ENCODE measurements at regions of chr1 and their contacts with region 1.

Region 1: GRCh38 chr1:80656071-80656509 is 1144.6 kb upstream of the ADGRL2 start:
- DNase-seq: no peak
- H3K4me3 ChIP-seq: no peak overlapping the region
- H3K27ac ChIP-seq: no peak overlapping the region
- H3K4me1 ChIP-seq: peaks cover 0 to 7% (median 0%) of the 10 kb centered on the region in 4 experiments; a peak in 1 of 7 replicates
- H3K27me3 ChIP-seq: no peaks in the 10 kb centered on the region
- CTCF ChIP-seq: peak; percentile 5 to 72 (median 43)
- EP300 ChIP-seq: no peak
- POLR2A ChIP-seq: no peak
- RAD21 ChIP-seq: peak; percentile 52 to 55

Region 2: DNA sequence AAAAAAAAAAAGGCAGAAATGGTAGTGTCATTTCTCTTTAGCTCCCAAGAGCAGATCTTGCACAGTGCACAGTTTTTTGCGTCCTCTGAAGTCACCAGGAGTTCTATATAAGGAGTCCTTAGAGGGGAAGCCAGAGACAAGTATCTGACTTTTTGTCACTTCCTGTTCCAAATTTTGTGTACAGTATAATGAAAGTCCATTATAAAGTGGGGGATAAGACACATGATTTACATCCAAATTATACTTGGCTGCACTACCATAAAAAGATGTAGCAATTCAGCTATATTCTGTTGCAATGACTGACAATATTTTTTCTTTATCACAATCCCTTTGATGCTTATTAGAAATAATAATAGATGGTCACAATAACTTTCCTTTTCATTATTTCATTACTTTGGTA is 132.2 kb before region 1 on chr1:
- CTCF ChIA-PET with region 1: no interaction called
- POLR2A ChIA-PET with region 1: no interaction called
- DNase-seq: no peak
- H3K4me3 ChIP-seq: no peak overlapping the region
- H3K27ac ChIP-seq: no peak overlapping the region
- H3K4me1 ChIP-seq: no peaks in the 10 kb centered on the region
- H3K27me3 ChIP-seq: peaks cover 0 to 2% (median 0%) of the 10 kb centered on the region in 4 experiments; a peak in 1 of 7 replicates
- CTCF ChIP-seq: no peak
- EP300 ChIP-seq: no peak
- POLR2A ChIP-seq: no peak
- RAD21 ChIP-seq: no peak

Region 3: DNA sequence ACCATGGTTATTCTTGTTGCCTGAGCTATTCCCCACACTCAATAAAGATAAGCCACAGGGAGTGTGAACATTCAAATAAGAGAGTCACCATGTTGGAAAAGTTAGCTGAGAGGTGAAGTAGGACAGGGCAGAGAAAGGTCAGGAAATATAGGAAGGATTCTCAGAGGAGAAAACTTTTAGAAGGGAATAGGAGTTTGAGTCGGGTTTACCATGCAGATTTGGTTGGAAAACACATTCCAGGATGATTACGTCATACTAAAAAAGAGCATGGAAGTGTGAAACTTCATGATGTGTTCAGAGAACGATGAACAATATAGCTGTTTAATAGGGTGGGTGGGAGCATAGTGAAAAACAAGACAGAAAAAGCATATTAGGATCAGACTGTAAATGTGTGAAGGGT is 19.4 kb after region 1 on chr1:
- CTCF ChIA-PET with region 1: interaction called, 13 read pairs
- POLR2A ChIA-PET with region 1: interaction called, 3 read pairs
- DNase-seq: no peak
- H3K4me3 ChIP-seq: no peak overlapping the region
- H3K27ac ChIP-seq: no peak overlapping the region
- H3K4me1 ChIP-seq: 0 out of 7 replicates have a peak, but pooled peaks cover 0 to 3% (median 0%) of the 10 kb centered on the region in 4 experiments
- H3K27me3 ChIP-seq: no peaks in the 10 kb centered on the region
- CTCF ChIP-seq: no peak
- EP300 ChIP-seq: no peak
- POLR2A ChIP-seq: no peak
- RAD21 ChIP-seq: no peak

Measured in H1 (cell line).